Activated B cell treated with CpG ODN at 0.5 μM for 24 hours (primary cell): ENCODE measurements at regions of chr4 and their contacts with region 1.

Region 1: GRCh38 chr4:70901984-70902576 is at the start of gene MOB1B:
- DNase-seq: peak; percentile 73
- ATAC-seq: peak; percentile 96
- H3K4me3 Mint-ChIP-seq: peak within 1 kb of the TSS; percentile 98
- H3K27ac Mint-ChIP-seq: peak within 1 kb of the TSS; percentile 85
- H3K4me1 Mint-ChIP-seq: peaks cover 26% of the 10 kb centered on the region
- H3K27me3 Mint-ChIP-seq: no peaks in the 10 kb centered on the region
- CTCF ChIP-seq: no peak
- total RNA-seq, gene MOB1B: 22.2 and 23.4 TPM in 2 replicates

Region 2: DNA sequence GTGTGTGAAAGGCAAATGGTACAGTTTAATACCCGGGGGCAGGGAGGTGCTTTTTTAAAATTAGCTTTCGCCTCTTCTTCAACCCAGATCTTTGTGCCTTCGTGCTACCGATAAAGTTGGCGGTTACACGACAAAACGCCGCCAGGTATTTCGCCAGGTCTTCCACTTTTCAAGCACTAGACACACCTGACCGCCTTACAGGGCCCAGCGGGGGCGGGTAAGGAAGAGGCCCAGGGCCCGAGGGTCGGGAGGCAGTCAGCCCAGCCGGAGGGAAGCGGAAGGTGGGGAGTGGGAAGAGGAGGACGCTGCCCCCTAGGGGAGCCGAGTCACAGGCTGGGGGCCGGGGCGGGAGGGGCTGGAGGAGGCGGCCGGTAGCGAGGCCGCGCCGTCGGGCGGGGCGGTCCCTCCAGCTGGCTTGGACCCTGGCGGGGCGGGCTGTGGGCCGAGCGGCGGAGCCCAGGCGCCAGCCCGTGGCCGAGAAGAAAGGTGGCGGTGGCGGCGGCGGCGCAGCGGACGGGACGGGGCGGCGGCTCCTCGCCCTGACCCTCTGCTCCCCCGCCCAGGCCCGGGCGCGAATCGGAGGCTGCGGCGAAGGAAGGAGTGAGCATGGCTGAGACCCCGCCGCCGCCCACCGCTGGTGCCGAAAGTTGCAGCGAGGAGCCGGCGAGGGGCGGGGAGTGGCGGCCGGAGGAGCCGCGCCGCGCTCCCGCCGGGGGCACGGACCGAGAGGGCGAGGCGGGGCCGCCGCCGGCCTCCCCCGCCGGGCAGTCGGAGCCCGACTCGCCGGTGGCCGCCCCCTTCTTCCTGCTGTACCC is 197.5 kb before region 1 on chr4:
- CTCF ChIA-PET with region 1: interaction called, 6 read pairs
- POLR2A ChIA-PET with region 1: interaction called, 10 read pairs
- intact Hi-C with region 1: loop called (anchors 1 kb)
- DNase-seq: peak; percentile 69
- ATAC-seq: peak; percentile 67
- H3K4me3 Mint-ChIP-seq: peak overlapping the region; percentile 93
- H3K27ac Mint-ChIP-seq: peak overlapping the region; percentile 89
- H3K4me1 Mint-ChIP-seq: peaks cover 34% of the 10 kb centered on the region
- H3K27me3 Mint-ChIP-seq: no peaks in the 10 kb centered on the region
- CTCF ChIP-seq: no peak

Region 3: DNA sequence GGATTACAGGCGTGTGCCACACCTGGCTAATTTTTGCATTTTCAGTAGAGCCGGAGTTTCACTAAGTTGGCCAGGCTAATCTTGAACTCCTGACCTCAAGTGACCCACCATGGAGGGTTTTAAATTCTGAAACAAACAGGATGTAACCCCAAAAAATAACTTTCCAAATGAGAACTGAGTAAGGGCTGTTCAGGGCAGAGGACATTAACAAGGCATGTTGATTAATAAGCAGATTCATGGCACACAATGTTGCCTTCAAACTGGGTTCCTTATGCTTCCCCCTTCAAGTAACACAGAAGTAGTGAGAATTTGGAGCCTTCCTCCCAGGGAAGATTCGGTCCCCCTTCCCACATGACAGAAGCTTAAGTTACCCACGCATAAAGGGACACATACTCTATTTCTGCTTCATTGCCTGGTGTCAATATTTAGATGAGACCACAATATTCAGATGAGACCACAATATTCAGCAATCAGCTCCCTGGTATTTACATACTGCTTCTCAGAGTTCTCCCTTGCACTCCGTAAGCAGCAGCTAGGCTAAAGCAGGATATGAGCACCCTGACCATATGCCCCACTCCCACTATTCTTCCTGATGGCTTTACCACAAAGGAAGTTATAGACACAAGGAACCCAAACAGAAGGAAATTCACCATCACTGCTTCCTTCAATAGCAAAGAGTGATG is 83.8 kb before region 1 on chr4:
- CTCF ChIA-PET with region 1: no interaction called
- POLR2A ChIA-PET with region 1: no interaction called
- intact Hi-C with region 1: no loop called
- DNase-seq: no peak
- ATAC-seq: peak; percentile 49
- H3K4me3 Mint-ChIP-seq: no peak overlapping the region
- H3K27ac Mint-ChIP-seq: no peak overlapping the region
- H3K4me1 Mint-ChIP-seq: peaks cover 10% of the 10 kb centered on the region
- H3K27me3 Mint-ChIP-seq: no peaks in the 10 kb centered on the region
- CTCF ChIP-seq: no peak

Region 4: GRCh38 chr4:70874268-70875156 is 27.6 kb before region 1 on chr4:
- CTCF ChIA-PET with region 1: no interaction called
- POLR2A ChIA-PET with region 1: interaction called, 4 read pairs
- intact Hi-C with region 1: loop called (anchors 1 kb)
- DNase-seq: no peak
- ATAC-seq: peak; percentile 91
- H3K4me3 Mint-ChIP-seq: peak overlapping the region; percentile 71
- H3K27ac Mint-ChIP-seq: peak overlapping the region; percentile 69
- H3K4me1 Mint-ChIP-seq: peaks cover 29% of the 10 kb centered on the region
- H3K27me3 Mint-ChIP-seq: no peaks in the 10 kb centered on the region
- CTCF ChIP-seq: no peak

Region 5: DNA sequence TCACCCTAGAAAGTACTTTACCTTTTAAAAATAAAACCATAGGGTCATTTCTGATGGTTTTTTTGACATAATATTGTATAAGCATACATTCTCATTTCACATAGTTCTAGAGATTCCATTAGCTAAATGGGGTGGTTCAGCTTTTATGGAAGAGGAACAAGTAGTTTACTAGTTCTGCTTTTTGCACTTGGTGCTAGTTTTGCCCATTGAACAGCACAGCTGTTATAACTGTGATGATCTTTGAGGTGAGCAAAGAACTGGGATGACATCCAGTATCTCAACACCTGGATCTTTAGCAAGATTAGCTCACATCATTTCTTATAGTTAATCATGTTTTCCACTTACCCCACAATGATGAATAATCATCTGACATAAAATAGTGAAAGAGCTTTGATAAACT is 41.0 kb after region 1 on chr4:
- CTCF ChIA-PET with region 1: no interaction called
- POLR2A ChIA-PET with region 1: interaction called, 14 read pairs
- intact Hi-C with region 1: loop called (anchors 2 kb)
- DNase-seq: no peak
- ATAC-seq: peak; percentile 78
- H3K4me3 Mint-ChIP-seq: no peak overlapping the region
- H3K27ac Mint-ChIP-seq: peak overlapping the region; percentile 59
- H3K4me1 Mint-ChIP-seq: peaks cover 37% of the 10 kb centered on the region
- H3K27me3 Mint-ChIP-seq: no peaks in the 10 kb centered on the region
- CTCF ChIP-seq: no peak

Region 6: GRCh38 chr4:70993181-70994068 is 91.3 kb after region 1 on chr4 and contains the start of gene DCK:
- CTCF ChIA-PET with region 1: interaction called, 4 read pairs
- POLR2A ChIA-PET with region 1: interaction called, 20 read pairs
- intact Hi-C with region 1: loop called (anchors 1 kb)
- DNase-seq: peak; percentile 91
- ATAC-seq: peak; percentile 81
- H3K4me3 Mint-ChIP-seq: peak within 1 kb of the TSS; percentile 94
- H3K27ac Mint-ChIP-seq: peak within 1 kb of the TSS; percentile 94
- H3K4me1 Mint-ChIP-seq: peaks cover 55% of the 10 kb centered on the region
- H3K27me3 Mint-ChIP-seq: no peaks in the 10 kb centered on the region
- CTCF ChIP-seq: no peak
- total RNA-seq, gene DCK: 32.6 and 34.3 TPM in 2 replicates

Region 7: DNA sequence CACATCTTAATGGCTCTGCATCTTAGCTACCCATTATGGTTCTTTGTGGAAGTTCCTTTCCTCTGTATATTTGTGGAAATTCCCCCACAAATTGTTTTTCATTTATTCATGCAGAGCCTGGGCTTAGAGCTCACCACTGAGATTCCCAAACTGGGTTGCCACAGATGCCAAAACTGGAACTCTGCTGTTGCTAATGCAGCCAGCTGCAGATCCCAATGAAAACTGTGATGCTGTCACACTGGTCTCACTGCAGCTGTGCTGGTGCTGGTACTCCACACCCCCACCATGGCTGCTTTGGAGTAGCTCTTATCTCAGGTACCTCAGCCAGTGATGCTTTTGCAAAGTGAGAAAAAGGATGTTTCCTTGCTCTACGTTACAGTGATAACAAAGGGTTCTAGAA is 179.1 kb after region 1 on chr4:
- CTCF ChIA-PET with region 1: no interaction called
- POLR2A ChIA-PET with region 1: no interaction called
- intact Hi-C with region 1: no loop called
- DNase-seq: no peak
- ATAC-seq: no peak
- H3K4me3 Mint-ChIP-seq: no peak overlapping the region
- H3K27ac Mint-ChIP-seq: no peak overlapping the region
- H3K4me1 Mint-ChIP-seq: no peaks in the 10 kb centered on the region
- H3K27me3 Mint-ChIP-seq: no peaks in the 10 kb centered on the region
- CTCF ChIP-seq: no peak